ENCODE measurements at regions of chr3 and their contacts with region 1.

Region 1: DNA sequence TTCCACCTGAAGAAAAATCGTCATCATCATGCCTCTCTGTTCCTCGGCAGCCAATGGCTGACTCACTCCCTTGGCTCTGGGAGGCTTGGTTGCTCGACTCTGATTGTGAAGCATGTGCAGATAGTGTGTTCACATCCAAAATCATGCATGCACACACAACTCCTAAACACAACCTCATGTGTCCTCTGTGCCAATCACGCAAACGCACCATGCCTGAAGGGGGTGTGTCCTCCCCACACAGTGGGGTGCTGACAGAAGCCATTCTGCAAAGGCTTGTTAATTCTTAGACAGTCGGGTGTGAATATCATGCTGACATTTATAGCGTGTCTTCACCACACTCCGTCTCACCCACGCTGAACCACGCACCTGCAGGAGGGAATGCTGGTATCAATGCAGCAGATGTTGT is 11.4 kb upstream of the CCDC174 start:
- DNase-seq: no peak
- ATAC-seq: no peak
- H3K4me3 ChIP-seq: no peak overlapping the region
- H3K27ac ChIP-seq: no peak overlapping the region
- H3K4me1 ChIP-seq: no peaks in the 10 kb centered on the region
- H3K27me3 ChIP-seq: peaks cover 0 to 8% of the 10 kb centered on the region in 2 donors

Region 2: DNA sequence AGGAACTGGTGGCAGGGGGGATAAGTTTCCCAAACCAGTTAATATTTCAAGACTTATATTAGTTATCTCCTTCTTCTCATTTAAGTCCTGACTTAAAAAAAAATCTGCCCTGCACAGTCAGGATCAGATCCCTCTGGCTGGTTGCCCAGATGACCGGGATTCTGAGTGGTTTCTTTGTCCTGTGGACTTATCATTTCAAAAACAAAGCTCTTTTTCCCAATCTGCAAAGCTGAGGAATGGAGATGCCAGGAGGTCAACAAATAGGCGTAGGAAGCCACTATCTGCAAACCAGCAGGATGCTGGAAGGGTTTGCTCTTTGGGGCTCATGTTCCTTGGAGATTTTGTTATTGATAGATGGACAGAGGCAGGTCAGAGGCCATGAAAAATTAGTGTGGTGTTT is 40.6 kb after region 1 on chr3:
- intact Hi-C with region 1: no loop called
- DNase-seq: no peak
- ATAC-seq: no peak
- H3K4me3 ChIP-seq: no peak overlapping the region
- H3K27ac ChIP-seq: no peak overlapping the region
- H3K4me1 ChIP-seq: no peaks in the 10 kb centered on the region
- H3K27me3 ChIP-seq: no peaks in the 10 kb centered on the region

Region 3: GRCh38 chr3:14791343-14791945 is 151.3 kb after region 1 on chr3:
- intact Hi-C with region 1: no loop called
- DNase-seq: peak; percentile 67 to 86
- ATAC-seq: peak; percentile 70
- H3K4me3 ChIP-seq: no peak overlapping the region
- H3K27ac ChIP-seq: no peak overlapping the region
- H3K4me1 ChIP-seq: no peaks in the 10 kb centered on the region
- H3K27me3 ChIP-seq: no peaks in the 10 kb centered on the region

Region 4: GRCh38 chr3:15098503-15099363 is 458.6 kb after region 1 on chr3 and contains the start of gene RBSN:
- intact Hi-C with region 1: loop called in 1 of 2 experiments (anchors 10 kb)
- DNase-seq: peak; percentile 98 to 99
- ATAC-seq: peak; percentile 96
- H3K4me3 ChIP-seq: peak within 1 kb of the TSS; percentile 74 to 85
- H3K27ac ChIP-seq: peak within 1 kb of the TSS; percentile 14 to 94
- H3K4me1 ChIP-seq: peaks cover 0 to 6% of the 10 kb centered on the region in 2 donors
- H3K27me3 ChIP-seq: no peaks in the 10 kb centered on the region
- total RNA-seq, gene RBSN: 32.4 to 39.2 TPM

Measured in aorta (tissue), 5 donors.